B cell (primary cell): ENCODE measurements at regions of chr5 and their contacts with region 1.

Region 1: GRCh38 chr5:132410451-132411381 is 41.2 kb downstream of the SLC22A5 start:
- DNase-seq: peak; percentile 94
- ATAC-seq: peak; percentile 81
- H3K4me3 ChIP-seq: peak overlapping the region; percentile 71 to 93 (median 78)
- H3K4me3 Mint-ChIP-seq: peak overlapping the region; percentile 98
- H3K27ac ChIP-seq: peak overlapping the region; percentile 96 to 97
- H3K27ac Mint-ChIP-seq: peak overlapping the region; percentile 99
- H3K4me1 ChIP-seq: peaks cover 61 to 63% of the 10 kb centered on the region in 2 donors
- H3K4me1 Mint-ChIP-seq: peaks cover 68% of the 10 kb centered on the region
- H3K27me3 ChIP-seq: no peaks in the 10 kb centered on the region
- H3K27me3 Mint-ChIP-seq: no peaks in the 10 kb centered on the region
- CTCF ChIP-seq: peak; percentile 77

Region 2: DNA sequence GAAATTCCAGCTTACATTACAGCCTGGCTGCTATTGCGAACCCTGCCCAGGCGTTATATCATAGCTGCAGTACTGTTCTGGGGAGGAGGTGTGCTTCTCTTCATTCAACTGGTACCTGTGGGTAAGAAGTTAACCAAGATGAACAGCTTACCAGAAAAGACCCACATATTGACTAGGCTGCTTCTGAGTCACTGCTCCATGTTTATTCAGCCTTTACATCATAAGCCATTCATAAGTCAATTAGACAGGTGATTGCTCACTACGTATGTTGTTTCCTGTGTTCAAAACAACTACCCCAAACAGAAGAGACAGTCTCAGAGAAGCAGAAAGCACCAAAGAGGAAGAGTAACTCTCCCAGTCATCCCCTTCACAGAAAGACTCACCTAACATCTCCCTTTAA is 75.9 kb before region 1 on chr5:
- CTCF ChIA-PET with region 1: no interaction called
- POLR2A ChIA-PET with region 1: no interaction called
- intact Hi-C with region 1: no loop called
- DNase-seq: peak; percentile 31
- ATAC-seq: peak; percentile 75
- H3K4me3 ChIP-seq: no peak overlapping the region
- H3K4me3 Mint-ChIP-seq: no peak overlapping the region
- H3K27ac ChIP-seq: no peak overlapping the region
- H3K27ac Mint-ChIP-seq: peak overlapping the region; percentile 26
- H3K4me1 ChIP-seq: no peaks in the 10 kb centered on the region
- H3K4me1 Mint-ChIP-seq: peaks cover 6% of the 10 kb centered on the region
- H3K27me3 ChIP-seq: no peaks in the 10 kb centered on the region
- H3K27me3 Mint-ChIP-seq: no peaks in the 10 kb centered on the region
- CTCF ChIP-seq: no peak

Region 3: GRCh38 chr5:132394667-132395259 is 16.0 kb before region 1 on chr5:
- CTCF ChIA-PET with region 1: interaction called, 13 read pairs
- POLR2A ChIA-PET with region 1: interaction called, 5 read pairs
- intact Hi-C with region 1: loop called (anchors 2 kb)
- DNase-seq: peak; percentile 59
- ATAC-seq: peak; percentile 91
- H3K4me3 ChIP-seq: no peak overlapping the region
- H3K4me3 Mint-ChIP-seq: peak overlapping the region; percentile 61
- H3K27ac ChIP-seq: peak overlapping the region; percentile 35 to 58
- H3K27ac Mint-ChIP-seq: peak overlapping the region; percentile 87
- H3K4me1 ChIP-seq: peaks cover 25 to 30% of the 10 kb centered on the region in 2 donors
- H3K4me1 Mint-ChIP-seq: peaks cover 46% of the 10 kb centered on the region
- H3K27me3 ChIP-seq: no peaks in the 10 kb centered on the region
- H3K27me3 Mint-ChIP-seq: no peaks in the 10 kb centered on the region
- CTCF ChIP-seq: no peak

Region 4: DNA sequence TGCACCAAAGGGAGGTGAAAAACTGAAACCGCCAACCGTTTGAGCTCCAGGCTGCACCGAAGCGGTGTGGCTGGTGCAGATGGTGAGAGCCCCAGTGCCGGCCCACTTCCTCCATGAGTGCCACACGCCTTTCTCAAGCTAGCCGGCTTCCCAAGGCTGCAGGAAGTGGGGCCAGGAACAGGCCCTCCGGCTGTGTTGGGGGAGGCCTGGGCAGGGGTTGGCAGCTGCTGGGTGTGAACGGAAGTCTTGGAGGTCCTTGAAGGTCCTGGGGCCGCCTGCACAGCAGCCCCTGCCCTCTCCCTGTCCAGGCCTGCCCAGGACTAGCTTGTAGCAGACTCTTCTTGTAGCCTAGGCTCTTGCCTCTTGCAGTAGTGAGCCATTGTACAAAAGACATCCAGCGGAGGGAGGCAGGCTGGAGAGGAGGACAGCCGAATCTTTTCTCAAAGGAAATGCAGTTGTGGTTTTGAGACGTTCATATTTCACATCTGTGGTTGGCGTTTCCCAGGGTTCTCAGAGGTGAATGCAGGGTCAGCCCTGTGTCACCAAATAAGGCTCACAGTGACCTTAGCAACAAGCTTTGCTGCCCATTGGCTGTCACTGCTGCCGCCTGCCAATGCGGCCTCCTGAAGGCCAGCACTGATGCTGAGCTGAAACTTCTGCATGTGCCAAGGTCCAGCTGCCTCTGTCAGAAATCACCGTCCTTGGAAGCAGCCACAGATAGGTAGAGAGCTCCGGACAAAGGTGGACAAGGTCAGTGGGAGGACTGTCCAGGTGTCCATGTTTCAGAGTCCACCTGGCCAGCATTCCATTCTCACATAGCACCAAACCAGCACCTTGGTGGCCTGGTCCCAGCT is 55.9 kb after region 1 on chr5:
- CTCF ChIA-PET with region 1: interaction called, 16 read pairs
- POLR2A ChIA-PET with region 1: interaction called, 5 read pairs
- intact Hi-C with region 1: loop called (anchors 2 kb)
- DNase-seq: peak; percentile 72
- ATAC-seq: peak; percentile 61
- H3K4me3 ChIP-seq: peak overlapping the region; percentile 10 to 53 (median 35)
- H3K4me3 Mint-ChIP-seq: peak overlapping the region; percentile 62
- H3K27ac ChIP-seq: peak overlapping the region; percentile 70 to 72
- H3K27ac Mint-ChIP-seq: peak overlapping the region; percentile 77
- H3K4me1 ChIP-seq: peaks cover 71 to 83% of the 10 kb centered on the region in 2 donors
- H3K4me1 Mint-ChIP-seq: peaks cover 85% of the 10 kb centered on the region
- H3K27me3 ChIP-seq: no peaks in the 10 kb centered on the region
- H3K27me3 Mint-ChIP-seq: no peaks in the 10 kb centered on the region
- CTCF ChIP-seq: no peak

Region 5: DNA sequence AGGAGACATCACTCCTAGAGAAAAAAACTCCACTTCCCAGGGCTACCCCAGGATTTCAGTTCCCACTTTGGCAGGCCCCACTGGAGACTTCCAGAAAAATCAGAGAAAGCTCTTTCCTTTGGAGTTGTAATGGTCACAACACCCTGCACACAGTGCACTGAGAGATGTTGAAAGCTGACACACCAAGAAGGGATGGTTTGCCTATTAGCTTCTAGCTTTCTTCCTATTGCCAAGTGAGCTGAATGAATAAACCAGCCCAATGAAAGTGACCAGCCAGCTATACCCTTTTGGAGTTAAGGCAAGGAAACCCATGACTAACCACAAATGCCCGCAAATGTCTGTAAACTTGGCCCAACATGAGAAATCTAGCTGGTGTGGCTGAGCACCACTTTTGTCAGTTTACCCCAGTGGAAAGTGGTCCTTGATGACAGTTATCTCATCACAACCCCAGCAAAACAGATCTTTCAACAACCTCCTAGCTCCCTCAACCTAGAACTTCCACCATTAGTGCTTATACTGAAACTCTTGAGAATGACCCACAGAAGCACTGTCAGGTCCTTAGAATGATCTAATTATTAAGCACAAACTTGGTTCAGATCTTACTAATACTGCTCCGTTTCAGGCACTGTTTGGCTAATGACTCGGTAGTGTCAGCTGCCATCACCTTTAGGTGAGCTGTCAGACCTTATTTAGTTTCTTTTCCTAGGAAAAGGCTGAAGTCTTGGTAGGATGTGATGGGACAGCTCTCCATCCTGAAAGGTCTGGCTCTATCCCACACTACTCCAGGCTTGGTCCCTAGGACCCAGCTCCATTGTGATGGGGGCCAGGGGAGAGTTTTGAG is 68.6 kb after region 1 on chr5:
- CTCF ChIA-PET with region 1: interaction called, 22 read pairs
- POLR2A ChIA-PET with region 1: interaction called, 25 read pairs
- intact Hi-C with region 1: no loop called
- DNase-seq: peak; percentile 37
- ATAC-seq: no peak
- H3K4me3 ChIP-seq: no peak overlapping the region
- H3K4me3 Mint-ChIP-seq: peak overlapping the region; percentile 58
- H3K27ac ChIP-seq: peak overlapping the region; percentile 6 to 56
- H3K27ac Mint-ChIP-seq: peak overlapping the region; percentile 99
- H3K4me1 ChIP-seq: peaks cover 30 to 64% of the 10 kb centered on the region in 2 donors
- H3K4me1 Mint-ChIP-seq: peaks cover 77% of the 10 kb centered on the region
- H3K27me3 ChIP-seq: no peaks in the 10 kb centered on the region
- H3K27me3 Mint-ChIP-seq: no peaks in the 10 kb centered on the region
- CTCF ChIP-seq: no peak

Region 6: DNA sequence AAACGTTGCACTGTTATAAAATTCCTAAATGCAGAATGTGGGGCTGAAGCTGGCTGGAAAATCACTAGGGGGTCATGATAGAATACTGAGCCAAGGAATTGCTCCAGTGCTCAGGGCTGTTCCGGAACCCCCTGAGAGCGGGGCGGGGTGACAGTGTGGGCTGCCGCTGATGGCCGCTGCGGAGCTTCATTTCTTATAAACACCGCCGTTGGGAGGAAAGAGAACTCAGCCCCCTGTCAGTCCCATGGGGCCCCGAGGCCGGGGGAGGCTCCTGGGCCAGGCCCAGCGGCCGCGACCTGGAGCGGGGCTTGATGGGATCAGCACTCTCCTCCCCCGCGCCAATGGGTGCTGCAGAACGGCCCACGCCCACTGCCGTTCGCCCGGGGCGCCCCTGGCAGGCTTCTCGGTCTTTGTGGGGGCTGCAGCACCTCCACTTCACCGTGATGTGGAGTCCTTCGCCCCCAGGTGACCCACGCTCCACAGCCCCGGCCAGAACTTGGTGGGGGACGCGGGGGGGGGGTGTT is 85.0 kb after region 1 on chr5:
- CTCF ChIA-PET with region 1: interaction called, 68 read pairs
- POLR2A ChIA-PET with region 1: interaction called, 57 read pairs
- intact Hi-C with region 1: loop called (anchors 1 kb)
- DNase-seq: peak; percentile 91
- ATAC-seq: peak; percentile 58
- H3K4me3 ChIP-seq: peak overlapping the region; percentile 42 to 91 (median 84)
- H3K4me3 Mint-ChIP-seq: peak overlapping the region; percentile 97
- H3K27ac ChIP-seq: peak overlapping the region; percentile 85 to 95
- H3K27ac Mint-ChIP-seq: peak overlapping the region; percentile 97
- H3K4me1 ChIP-seq: peaks cover 48 to 59% of the 10 kb centered on the region in 2 donors
- H3K4me1 Mint-ChIP-seq: peaks cover 68% of the 10 kb centered on the region
- H3K27me3 ChIP-seq: no peaks in the 10 kb centered on the region
- H3K27me3 Mint-ChIP-seq: no peaks in the 10 kb centered on the region
- CTCF ChIP-seq: no peak